ENCODE measurements at regions of chr15 and their contacts with region 1.

Region 1: GRCh38 chr15:31488426-31489204 is 162.0 kb downstream of the KLF13 start:
- ATAC-seq: peak; percentile 21 to 90 (median 69)
- H3K4me3 ChIP-seq: no peak overlapping the region
- H3K27ac ChIP-seq: no peak overlapping the region
- H3K4me1 ChIP-seq: peaks cover 0 to 11% of the 10 kb centered on the region in 2 donors

Region 2: DNA sequence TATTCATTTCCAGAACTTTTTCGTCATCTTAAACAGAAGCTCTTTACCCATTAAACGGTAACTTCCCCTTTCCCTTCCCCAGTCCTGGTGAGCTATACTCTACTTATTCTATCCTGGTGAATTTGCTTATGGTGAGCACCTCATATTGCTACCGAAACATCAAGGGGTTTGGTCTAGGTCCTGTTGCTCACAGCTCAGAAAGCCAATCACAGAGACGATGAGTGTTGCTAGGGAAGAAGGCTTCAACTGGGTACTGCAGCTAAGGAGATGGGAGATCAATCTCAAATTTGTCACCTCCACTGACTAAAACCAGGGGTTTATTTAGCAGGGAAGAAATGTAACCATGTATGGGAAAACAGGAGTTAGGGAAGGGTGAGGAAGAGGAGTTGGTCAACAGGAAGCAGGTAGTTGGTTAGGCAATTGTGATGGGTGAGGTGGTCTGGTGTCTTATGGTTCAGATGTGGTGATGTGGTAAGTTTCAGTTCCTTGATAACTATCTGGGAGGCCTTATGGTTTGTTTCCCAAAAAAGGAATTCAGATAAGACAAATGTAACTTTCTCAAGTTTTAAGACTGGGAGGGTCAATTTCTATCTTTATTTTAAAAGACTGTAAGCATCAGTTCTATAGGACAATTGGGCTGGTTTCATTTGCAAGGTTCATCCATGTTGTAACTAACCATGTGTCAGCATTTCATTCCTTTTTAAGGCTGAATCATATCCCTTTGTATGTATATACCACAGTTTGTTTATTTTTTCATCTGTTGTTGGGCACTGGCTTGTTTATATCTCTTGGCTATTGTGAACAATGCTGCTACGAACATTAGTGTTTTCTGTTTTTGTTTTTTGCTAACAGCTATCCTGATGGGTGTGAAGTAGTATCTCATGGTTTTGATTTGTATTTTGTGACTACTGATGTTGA is 838.3 kb before region 1 on chr15:
- in situ Hi-C with region 1: loop called in 2 of 9 experiments (anchors 25 kb)
- ATAC-seq: no peak
- H3K4me3 ChIP-seq: no peak overlapping the region
- H3K27ac ChIP-seq: no peak overlapping the region
- H3K4me1 ChIP-seq: no peaks in the 10 kb centered on the region

Region 3: DNA sequence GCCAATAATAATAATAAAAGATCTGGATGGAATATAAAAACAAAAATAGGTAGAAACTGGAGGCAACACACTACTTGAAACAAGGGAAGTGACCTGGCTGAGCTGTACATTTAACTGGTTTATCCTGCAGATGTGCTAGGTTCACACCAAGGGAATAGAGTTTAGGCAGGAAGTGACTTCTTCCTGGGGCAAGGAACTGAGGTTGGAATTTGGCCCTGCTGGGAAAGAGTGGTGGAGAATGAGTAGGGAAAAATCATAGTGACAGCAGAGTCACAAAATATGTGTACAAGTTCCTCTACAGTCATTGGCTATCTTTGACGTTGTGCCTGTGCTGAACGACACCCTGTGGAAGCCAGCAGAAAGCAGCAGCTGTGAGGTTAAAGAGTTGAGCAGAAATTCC is 818.6 kb before region 1 on chr15:
- in situ Hi-C with region 1: loop called in 3 of 9 experiments (anchors 10 to 25 kb)
- ATAC-seq: peak in 1 of 8 experiments; percentile 13
- H3K4me3 ChIP-seq: no peak overlapping the region
- H3K27ac ChIP-seq: no peak overlapping the region
- H3K4me1 ChIP-seq: no peaks in the 10 kb centered on the region

Region 4: DNA sequence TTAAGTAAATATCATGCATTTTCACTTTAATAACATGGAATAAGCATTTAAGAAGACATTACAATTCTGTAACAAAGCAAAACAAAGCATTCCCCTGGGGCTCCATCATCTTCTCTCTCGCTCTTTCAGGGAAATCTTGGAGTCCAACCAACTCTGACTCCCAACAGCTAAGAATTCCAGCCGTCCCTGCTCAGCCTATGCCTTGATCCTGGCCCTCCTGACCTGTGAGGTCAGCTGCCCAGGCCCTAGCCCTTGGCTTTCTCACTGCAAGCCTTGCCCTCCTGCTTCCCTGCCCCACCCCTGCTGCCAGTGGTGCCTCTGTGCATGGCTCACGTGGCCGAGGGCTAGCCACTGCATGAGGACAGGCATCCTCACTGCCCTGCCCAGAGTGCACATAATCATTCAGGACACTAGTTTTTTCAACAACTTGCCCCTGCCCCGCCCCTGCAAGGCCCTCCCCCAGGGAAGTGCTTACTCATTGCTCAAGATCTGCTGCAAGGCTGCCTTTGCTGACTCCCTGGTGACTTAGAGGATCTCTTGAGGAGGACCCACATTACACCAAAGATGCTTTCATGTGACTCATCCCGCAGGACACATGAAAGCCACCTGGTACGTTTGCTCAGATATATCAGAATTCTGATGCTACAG is 534.8 kb before region 1 on chr15:
- in situ Hi-C with region 1: loop called in 1 of 9 experiments (anchors 25 kb)
- ATAC-seq: peak in 3 of 8 experiments; percentile 87 to 96 (median 95)
- H3K4me3 ChIP-seq: no peak overlapping the region
- H3K27ac ChIP-seq: no peak overlapping the region
- H3K4me1 ChIP-seq: no peaks in the 10 kb centered on the region

Region 5: DNA sequence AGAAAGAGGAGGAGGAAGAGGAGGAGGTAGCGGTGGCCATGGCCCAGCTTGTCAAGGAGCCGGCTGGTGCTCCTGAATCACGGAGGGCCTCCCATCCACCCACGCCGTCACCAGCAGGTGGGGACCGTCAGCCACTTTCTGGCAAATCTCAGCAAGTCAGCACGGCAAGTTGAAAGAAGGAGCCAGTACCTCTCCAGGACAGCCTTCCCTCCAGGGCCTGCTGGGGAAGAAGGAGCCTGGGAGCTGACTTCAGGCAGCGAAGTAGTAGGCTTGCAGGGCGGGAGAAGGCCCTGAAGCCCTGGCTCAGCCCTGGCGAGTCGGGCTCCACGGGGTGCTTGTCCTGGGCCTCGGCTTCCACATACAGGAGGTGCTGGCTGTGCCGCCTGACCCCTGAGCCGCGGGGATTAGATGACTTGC is 287.9 kb before region 1 on chr15:
- in situ Hi-C with region 1: loop called in 3 of 9 experiments (anchors 25 kb)
- ATAC-seq: peak; percentile 27 to 88 (median 76)
- H3K4me3 ChIP-seq: no peak overlapping the region
- H3K27ac ChIP-seq: no peak overlapping the region
- H3K4me1 ChIP-seq: peaks cover 0 to 6% of the 10 kb centered on the region in 2 donors

Region 6: DNA sequence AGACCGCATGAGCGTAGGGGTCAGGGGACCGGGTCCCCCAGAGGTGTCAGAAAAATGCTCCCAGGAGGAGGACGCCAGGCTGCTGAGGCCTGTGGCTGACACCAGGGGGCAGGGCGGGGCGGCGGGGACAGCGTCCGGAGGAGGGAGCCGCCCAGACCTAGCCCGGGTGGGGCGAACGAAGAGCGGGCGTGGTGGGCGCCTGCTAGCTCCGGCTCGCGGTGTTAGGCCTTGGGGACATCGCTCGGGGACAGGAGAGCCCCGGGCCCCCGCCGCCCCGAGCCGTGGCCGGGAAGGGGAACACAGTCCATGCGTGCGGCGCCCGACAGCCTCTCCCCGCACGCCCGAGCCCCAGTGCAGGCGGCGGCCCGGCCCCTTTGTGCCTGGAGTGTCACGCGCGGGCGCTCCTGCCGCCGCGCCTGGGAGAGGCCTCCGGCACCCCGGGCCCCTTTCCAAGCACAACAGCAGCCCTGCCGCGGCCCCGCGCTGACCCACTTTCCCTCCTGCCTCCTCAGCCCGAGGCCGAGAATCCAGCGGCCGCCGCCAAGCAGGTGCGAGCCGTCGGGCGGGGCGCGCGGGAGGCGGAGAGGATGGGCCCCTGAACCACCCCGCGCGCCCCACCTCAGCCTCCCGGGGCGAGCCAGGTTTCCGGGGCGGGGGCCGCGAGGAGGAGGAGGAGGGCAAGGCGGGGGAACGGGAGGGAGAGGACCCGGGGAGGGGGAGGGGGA is 273.0 kb before region 1 on chr15:
- in situ Hi-C with region 1: loop called in 2 of 9 experiments (anchors 25 kb)
- ATAC-seq: peak; percentile 55 to 81 (median 76)
- H3K4me3 ChIP-seq: peak overlapping the region; percentile 26 to 45 (median 33)
- H3K27ac ChIP-seq: peak overlapping the region; percentile 56 to 88
- H3K4me1 ChIP-seq: peaks cover 8 to 11% of the 10 kb centered on the region in 2 donors

Region 7: GRCh38 chr15:31280046-31280830 is 208.4 kb before region 1 on chr15:
- in situ Hi-C with region 1: no loop called
- ATAC-seq: peak; percentile 84 to 90 (median 88)
- H3K4me3 ChIP-seq: no peak overlapping the region
- H3K27ac ChIP-seq: peak overlapping the region; percentile 64 to 80
- H3K4me1 ChIP-seq: peaks cover 25 to 31% of the 10 kb centered on the region in 2 donors

Region 8: GRCh38 chr15:31365655-31366127 is 122.9 kb before region 1 on chr15:
- in situ Hi-C with region 1: loop called in 1 of 9 experiments (anchors 10 kb)
- ATAC-seq: peak; percentile 79 to 95 (median 92)
- H3K4me3 ChIP-seq: no peak overlapping the region
- H3K27ac ChIP-seq: peak overlapping the region in 1 of 2 donors; percentile 23
- H3K4me1 ChIP-seq: peaks cover 45 to 48% of the 10 kb centered on the region in 2 donors

Measured in motor neuron (in vitro differentiated cells).